ENCODE measurements at regions of chr13 and their contacts with region 1.

Region 1: DNA sequence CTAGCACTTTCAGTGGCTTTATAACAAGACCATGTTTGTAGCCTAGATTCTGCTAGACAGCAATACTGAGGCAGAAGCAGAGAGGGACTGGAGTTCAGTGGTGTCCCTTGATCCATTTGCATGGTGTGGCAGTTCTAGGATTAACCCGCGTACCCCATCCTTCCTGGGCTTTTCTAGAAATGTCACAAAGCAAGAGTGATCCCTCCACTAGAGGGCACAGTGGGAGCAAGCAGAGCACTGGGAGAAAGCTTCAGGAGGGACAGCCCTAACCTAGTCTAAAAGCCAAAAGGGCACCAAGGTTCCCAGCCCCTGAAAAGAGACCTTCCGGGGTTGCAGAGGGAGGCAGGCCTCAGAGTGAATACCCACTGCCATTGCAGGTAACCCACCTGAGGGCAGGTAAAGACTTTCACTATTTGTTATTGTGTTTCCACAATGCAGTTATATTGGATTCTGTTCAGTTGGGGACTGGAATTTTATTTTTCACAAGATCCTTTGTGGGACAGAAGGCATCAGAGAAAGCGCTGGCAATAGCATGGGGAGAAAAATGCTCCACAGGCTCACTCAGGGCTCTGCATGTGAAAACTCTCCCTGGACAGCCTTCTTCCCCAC is 170.6 kb downstream of the FLT1 start:
- DNase-seq: no peak
- H3K4me3 ChIP-seq: no peak overlapping the region
- H3K27ac ChIP-seq: no peak overlapping the region
- H3K27me3 ChIP-seq: no peaks in the 10 kb centered on the region
- CTCF ChIP-seq: peak; percentile 93

Region 2: DNA sequence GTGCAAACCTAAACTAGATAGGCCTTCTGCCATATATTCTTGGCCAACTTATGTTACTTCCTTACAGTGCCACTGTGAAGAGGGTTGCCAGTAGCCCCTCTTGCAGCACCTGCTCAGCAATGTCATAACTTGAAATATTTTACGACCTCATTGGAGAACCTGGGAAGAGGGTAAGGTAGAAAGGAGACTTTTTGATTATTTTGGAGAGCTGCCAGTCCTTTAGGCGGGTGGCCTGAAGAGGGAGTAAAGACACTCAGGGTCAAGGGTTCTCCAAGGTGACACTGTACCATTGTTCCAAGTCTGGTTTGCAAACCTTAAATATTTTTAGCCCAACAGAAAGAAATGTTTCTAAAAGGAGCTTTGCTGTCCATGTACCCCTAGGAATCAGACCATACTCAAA is 52.3 kb after region 1 on chr13:
- CTCF ChIA-PET with region 1: no interaction called
- POLR2A ChIA-PET with region 1: no interaction called
- DNase-seq: no peak
- H3K4me3 ChIP-seq: no peak overlapping the region
- H3K27ac ChIP-seq: no peak overlapping the region
- H3K27me3 ChIP-seq: peaks cover 2% of the 10 kb centered on the region
- CTCF ChIP-seq: no peak; the same call in 1 of the 2 replicates

Region 3: GRCh38 chr13:28636674-28637317 is 312.5 kb after region 1 on chr13:
- CTCF ChIA-PET with region 1: interaction called, 29 read pairs
- POLR2A ChIA-PET with region 1: no interaction called
- DNase-seq: peak; percentile 50
- H3K4me3 ChIP-seq: no peak overlapping the region
- H3K27ac ChIP-seq: no peak overlapping the region
- H3K27me3 ChIP-seq: no peaks in the 10 kb centered on the region
- CTCF ChIP-seq: peak; percentile 98

Region 4: GRCh38 chr13:28658796-28659620 is 334.7 kb after region 1 on chr13 and contains the start of gene POMP:
- CTCF ChIA-PET with region 1: interaction called, 12 read pairs
- POLR2A ChIA-PET with region 1: no interaction called
- DNase-seq: peak; percentile 83
- H3K4me3 ChIP-seq: peak within 1 kb of the TSS; percentile 97
- H3K27ac ChIP-seq: peak within 1 kb of the TSS; percentile 94
- H3K27me3 ChIP-seq: no peaks in the 10 kb centered on the region
- CTCF ChIP-seq: 0 out of 2 replicates have a peak, but pooled peaks have one; percentile 2
- polyA plus RNA-seq, gene POMP: 89.6 and 117 TPM in 2 replicates

Region 5: GRCh38 chr13:28718543-28719226 is 394.4 kb after region 1 on chr13 and contains the start of gene SLC46A3:
- CTCF ChIA-PET with region 1: no interaction called
- POLR2A ChIA-PET with region 1: no interaction called
- DNase-seq: peak; percentile 96
- H3K4me3 ChIP-seq: peak within 1 kb of the TSS; percentile 73
- H3K27ac ChIP-seq: peak within 1 kb of the TSS; percentile 86
- H3K27me3 ChIP-seq: no peaks in the 10 kb centered on the region
- CTCF ChIP-seq: peak; percentile 21; the same call in 1 of the 2 replicates
- polyA plus RNA-seq, gene SLC46A3: 3.9 and 5.2 TPM in 2 replicates

Region 6: DNA sequence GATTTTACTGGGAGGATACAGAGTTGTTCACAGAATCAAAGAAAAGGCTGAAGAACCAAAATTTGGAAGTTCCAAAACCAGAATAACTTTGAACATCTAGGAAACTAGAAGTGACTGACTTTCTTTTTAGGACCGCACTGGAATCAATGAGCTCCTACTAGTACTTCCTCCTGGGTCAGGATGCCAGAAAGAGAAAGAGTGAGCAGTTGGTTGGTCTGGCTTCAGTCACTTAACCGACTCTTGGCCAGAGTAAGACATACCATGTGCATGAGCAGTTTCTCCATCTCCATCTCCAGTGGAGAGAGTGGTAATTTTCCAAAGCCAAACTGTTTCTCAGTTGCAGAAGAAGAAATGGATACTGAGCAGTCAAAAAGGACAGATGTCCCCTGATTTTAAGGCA is 468.7 kb after region 1 on chr13:
- CTCF ChIA-PET with region 1: interaction called, 11 read pairs
- POLR2A ChIA-PET with region 1: no interaction called
- DNase-seq: peak; percentile 34
- H3K4me3 ChIP-seq: no peak overlapping the region
- H3K27ac ChIP-seq: no peak overlapping the region
- H3K27me3 ChIP-seq: peaks cover 17% of the 10 kb centered on the region
- CTCF ChIP-seq: no peak

Region 7: GRCh38 chr13:28889086-28889732 is 564.9 kb after region 1 on chr13:
- CTCF ChIA-PET with region 1: no interaction called
- POLR2A ChIA-PET with region 1: no interaction called
- DNase-seq: no peak
- H3K4me3 ChIP-seq: no peak overlapping the region
- H3K27ac ChIP-seq: no peak overlapping the region
- H3K27me3 ChIP-seq: no peaks in the 10 kb centered on the region
- CTCF ChIP-seq: no peak